ENCODE measurements at regions of chr14 and their contacts with region 1.

Region 1: GRCh38 chr14:77097700-77098528 is at the start of gene CIPC:
- DNase-seq: peak; percentile 100
- H3K4me3 Mint-ChIP-seq: peak within 1 kb of the TSS; percentile 85
- H3K27ac Mint-ChIP-seq: peak within 1 kb of the TSS; percentile 84
- H3K4me1 Mint-ChIP-seq: peaks cover 36% of the 10 kb centered on the region
- H3K27me3 Mint-ChIP-seq: no peaks in the 10 kb centered on the region
- total RNA-seq, gene CIPC: 7.3 to 7.5 TPM

Region 2: DNA sequence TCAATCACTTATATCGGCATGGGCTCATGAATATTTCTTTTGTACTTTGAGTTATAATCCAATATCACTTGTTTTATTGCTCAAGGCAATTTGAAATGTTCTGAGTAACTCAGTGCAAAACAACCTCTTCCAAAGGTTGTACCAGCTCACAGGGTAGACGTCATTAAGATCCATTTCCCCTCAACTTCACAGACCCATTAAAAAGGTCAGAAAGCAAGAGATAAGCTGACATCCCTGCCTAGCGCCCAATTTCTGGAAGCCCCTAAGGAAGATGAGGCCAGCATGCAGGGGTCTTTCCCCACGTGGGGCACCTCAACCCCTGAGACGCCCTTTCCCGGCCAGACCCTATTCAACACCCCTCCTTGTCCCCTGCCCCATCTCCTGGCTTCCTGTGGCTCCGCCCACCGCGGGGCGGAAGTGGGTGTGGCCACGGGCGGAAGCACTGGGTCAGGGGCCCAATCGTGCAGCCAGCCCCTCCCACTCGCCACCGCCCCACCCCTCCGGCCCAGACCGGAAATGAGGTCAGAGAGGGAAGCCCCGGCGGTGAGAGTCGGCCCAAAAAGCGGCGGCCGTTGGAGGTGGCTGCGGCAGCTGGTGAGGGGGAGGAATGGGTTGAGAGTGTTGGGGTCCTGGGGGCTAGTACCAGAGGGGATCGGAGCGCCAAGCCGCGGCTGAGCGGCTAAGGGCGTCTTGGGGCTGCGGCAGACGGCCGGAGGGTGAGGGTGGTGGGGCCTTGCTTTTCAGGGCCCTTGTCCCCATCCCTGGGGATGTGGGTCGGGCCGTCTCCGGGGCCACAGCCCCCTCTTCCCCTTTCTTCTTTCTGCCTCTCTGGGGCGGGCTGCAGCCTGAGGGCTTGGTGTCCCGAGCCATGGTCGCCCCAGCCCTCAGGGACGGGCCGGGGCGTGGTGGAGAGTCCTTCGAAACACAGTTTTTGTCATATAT is 946.2 kb before region 1 on chr14 and contains the start of gene GPATCH2L:
- CTCF ChIA-PET with region 1: no interaction called
- POLR2A ChIA-PET with region 1: no interaction called
- intact Hi-C with region 1: loop called (anchors 5 kb)
- DNase-seq: peak; percentile 99
- H3K4me3 Mint-ChIP-seq: peak within 1 kb of the TSS; percentile 93
- H3K27ac Mint-ChIP-seq: peak within 1 kb of the TSS; percentile 96
- H3K4me1 Mint-ChIP-seq: peaks cover 49% of the 10 kb centered on the region
- H3K27me3 Mint-ChIP-seq: no peaks in the 10 kb centered on the region
- total RNA-seq, gene GPATCH2L: 50.1 to 52.1 TPM

Region 3: GRCh38 chr14:76876076-76876475 is 221.8 kb before region 1 on chr14:
- CTCF ChIA-PET with region 1: interaction called, 136 read pairs
- POLR2A ChIA-PET with region 1: no interaction called
- intact Hi-C with region 1: loop called (anchors 1 kb)
- DNase-seq: peak; percentile 61
- H3K4me3 Mint-ChIP-seq: no peak overlapping the region
- H3K27ac Mint-ChIP-seq: no peak overlapping the region
- H3K4me1 Mint-ChIP-seq: peaks cover 2% of the 10 kb centered on the region
- H3K27me3 Mint-ChIP-seq: no peaks in the 10 kb centered on the region

Region 4: GRCh38 chr14:77040059-77040740 is 57.7 kb before region 1 on chr14:
- CTCF ChIA-PET with region 1: interaction called, 3 read pairs
- POLR2A ChIA-PET with region 1: no interaction called
- intact Hi-C with region 1: loop called (anchors 2 kb)
- DNase-seq: peak; percentile 97
- H3K4me3 Mint-ChIP-seq: peak overlapping the region; percentile 77
- H3K27ac Mint-ChIP-seq: peak overlapping the region; percentile 99
- H3K4me1 Mint-ChIP-seq: peaks cover 88% of the 10 kb centered on the region
- H3K27me3 Mint-ChIP-seq: no peaks in the 10 kb centered on the region

Region 5: GRCh38 chr14:77086017-77086736 is 11.7 kb before region 1 on chr14:
- CTCF ChIA-PET with region 1: interaction called, 14 read pairs
- POLR2A ChIA-PET with region 1: no interaction called
- intact Hi-C with region 1: no loop called
- DNase-seq: no peak
- H3K4me3 Mint-ChIP-seq: no peak overlapping the region
- H3K27ac Mint-ChIP-seq: no peak overlapping the region
- H3K4me1 Mint-ChIP-seq: peaks cover 8% of the 10 kb centered on the region
- H3K27me3 Mint-ChIP-seq: peaks cover under 1% of the 10 kb centered on the region

Region 6: DNA sequence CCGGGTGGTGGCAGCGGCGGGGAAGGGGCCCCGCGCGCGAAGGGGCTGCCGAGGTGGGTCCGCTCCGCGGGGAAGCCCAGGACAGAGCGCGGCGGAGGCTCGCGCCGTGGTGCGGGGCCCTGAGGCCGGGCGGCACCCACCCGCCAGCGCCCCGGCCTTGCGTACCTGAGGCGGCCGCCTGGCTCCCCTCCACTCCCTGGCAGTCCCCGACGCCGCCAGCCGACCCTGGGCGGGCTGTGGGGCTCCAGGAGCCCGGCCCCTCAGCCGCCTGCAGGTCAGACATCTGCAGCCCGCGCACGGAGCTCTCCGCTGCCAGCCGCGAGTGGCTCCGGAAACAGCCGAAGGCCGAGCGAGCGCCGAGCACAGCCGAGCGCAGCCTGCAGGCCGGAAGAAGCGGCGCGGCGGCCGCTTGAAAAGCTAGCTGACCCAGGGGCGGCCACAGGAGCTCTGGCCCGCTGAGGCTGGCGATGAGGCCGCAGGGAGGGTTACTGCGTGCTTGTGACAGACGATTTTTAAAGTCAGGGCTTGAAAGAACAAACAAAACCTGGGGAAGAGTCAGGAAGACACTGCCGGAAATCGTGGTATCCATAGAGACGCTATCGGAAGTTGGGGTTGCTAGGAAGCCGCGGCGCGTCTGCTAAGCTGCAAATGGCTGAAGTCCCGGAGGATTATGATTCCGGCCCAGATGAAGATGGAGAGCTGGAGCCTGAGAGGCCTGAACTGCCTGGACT is 279.0 kb after region 1 on chr14 and contains the starts of genes SAMD15 and TMED8:
- CTCF ChIA-PET with region 1: no interaction called
- POLR2A ChIA-PET with region 1: no interaction called
- intact Hi-C with region 1: loop called (anchors 5 kb)
- DNase-seq: peak; percentile 88
- H3K4me3 Mint-ChIP-seq: peak within 1 kb of the TSS; percentile 92
- H3K27ac Mint-ChIP-seq: peak within 1 kb of the TSS; percentile 82
- H3K4me1 Mint-ChIP-seq: peaks cover 42% of the 10 kb centered on the region
- H3K27me3 Mint-ChIP-seq: no peaks in the 10 kb centered on the region
- total RNA-seq, gene SAMD15: 0.38 TPM in 1 of 2 experiments, not detected in the other
- total RNA-seq, gene TMED8: 26.9 to 27.8 TPM

Measured in activated CD4-positive, alpha-beta memory T cell treated with anti-CD3 and anti-CD28 coated beads for 36 hours (primary cell).